BJ (cell line): ENCODE measurements at regions of chr10 and their contacts with region 1.

Region 1: GRCh38 chr10:124388823-124389612 is 29.7 kb downstream of the OAT start:
- DNase-seq: no peak
- H3K4me3 ChIP-seq: peak overlapping the region; percentile 28
- H3K27me3 ChIP-seq: 0 out of 2 replicates have a peak, but pooled peaks cover 1% of the 10 kb centered on the region
- CTCF ChIP-seq: peak; percentile 86

Region 2: GRCh38 chr10:123994417-123995081 is 394.5 kb before region 1 on chr10:
- CTCF ChIA-PET with region 1: interaction called, 316 read pairs
- POLR2A ChIA-PET with region 1: no interaction called
- DNase-seq: peak; percentile 64
- H3K4me3 ChIP-seq: peak overlapping the region; percentile 10
- H3K27me3 ChIP-seq: peaks cover 9% of the 10 kb centered on the region
- CTCF ChIP-seq: peak; percentile 96

Region 3: DNA sequence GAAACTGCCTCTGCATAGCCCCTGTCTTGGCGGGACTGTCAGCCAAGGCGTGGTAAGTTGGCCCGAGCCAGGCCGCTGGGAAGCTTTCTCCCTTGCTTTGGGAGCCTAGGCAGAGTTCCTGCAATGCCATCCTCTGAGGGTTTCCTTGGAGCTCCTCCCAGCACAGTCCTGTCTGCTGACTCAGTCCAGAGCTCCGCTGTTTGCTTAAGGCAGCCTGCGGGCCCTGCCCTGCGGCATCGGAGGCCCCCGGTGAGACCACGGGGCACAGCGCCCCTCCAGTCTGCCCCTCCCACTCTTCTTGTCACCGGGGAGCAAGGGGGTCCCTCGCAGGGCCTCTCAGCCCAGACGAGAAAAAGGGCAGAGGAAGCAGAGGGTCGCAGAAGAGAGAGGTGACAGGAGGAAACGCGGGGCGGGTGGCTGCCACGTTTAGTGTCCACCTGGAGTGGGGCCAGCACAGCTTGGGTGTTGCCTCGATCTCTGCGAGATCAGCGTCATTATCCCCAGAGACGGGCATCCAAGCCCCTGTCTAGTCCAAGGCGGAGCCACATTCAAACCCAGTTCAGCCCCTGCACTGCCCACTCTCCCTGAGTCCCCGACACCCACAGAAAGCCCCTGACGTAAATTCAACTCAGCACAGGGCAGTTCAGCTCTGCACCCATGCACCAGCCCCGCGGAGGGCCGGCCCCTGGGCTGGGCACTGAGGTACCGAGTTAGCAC is 236.7 kb before region 1 on chr10:
- CTCF ChIA-PET with region 1: interaction called, 13 read pairs
- POLR2A ChIA-PET with region 1: no interaction called
- DNase-seq: no peak
- H3K4me3 ChIP-seq: no peak overlapping the region
- H3K27me3 ChIP-seq: no peaks in the 10 kb centered on the region
- CTCF ChIP-seq: no peak

Region 4: GRCh38 chr10:124296121-124296812 is 92.8 kb before region 1 on chr10:
- CTCF ChIA-PET with region 1: interaction called, 38 read pairs
- POLR2A ChIA-PET with region 1: no interaction called
- DNase-seq: peak; percentile 61
- H3K4me3 ChIP-seq: no peak overlapping the region
- H3K27me3 ChIP-seq: no peaks in the 10 kb centered on the region
- CTCF ChIP-seq: peak; percentile 40

Region 5: GRCh38 chr10:124378881-124379471 is 10.0 kb before region 1 on chr10:
- CTCF ChIA-PET with region 1: interaction called, 10 read pairs
- POLR2A ChIA-PET with region 1: no interaction called
- DNase-seq: no peak
- H3K4me3 ChIP-seq: no peak overlapping the region
- H3K27me3 ChIP-seq: peaks cover 3% of the 10 kb centered on the region; the same call in 1 of the 2 replicates
- CTCF ChIP-seq: no peak